ENCODE measurements at regions of chr9 and their contacts with region 1.

Region 1: GRCh38 chr9:133803028-133803585 is 65.0 kb upstream of the SARDH start:
- DNase-seq: no peak
- H3K4me3 ChIP-seq: no peak overlapping the region
- H3K27ac ChIP-seq: no peak overlapping the region
- H3K4me1 ChIP-seq: no peaks in the 10 kb centered on the region
- H3K27me3 ChIP-seq: no peaks in the 10 kb centered on the region
- CTCF ChIP-seq: no peak

Region 2: GRCh38 chr9:133499132-133499891 is 303.8 kb before region 1 on chr9:
- CTCF ChIA-PET with region 1: no interaction called
- dilution Hi-C with region 1: no loop called
- in situ Hi-C with region 1: no loop called
- intact Hi-C with region 1: no loop called
- DNase-seq: no peak
- H3K4me3 ChIP-seq: no peak overlapping the region
- H3K27ac ChIP-seq: no peak overlapping the region
- H3K4me1 ChIP-seq: no peaks in the 10 kb centered on the region
- H3K27me3 ChIP-seq: no peaks in the 10 kb centered on the region
- CTCF ChIP-seq: no peak

Region 3: DNA sequence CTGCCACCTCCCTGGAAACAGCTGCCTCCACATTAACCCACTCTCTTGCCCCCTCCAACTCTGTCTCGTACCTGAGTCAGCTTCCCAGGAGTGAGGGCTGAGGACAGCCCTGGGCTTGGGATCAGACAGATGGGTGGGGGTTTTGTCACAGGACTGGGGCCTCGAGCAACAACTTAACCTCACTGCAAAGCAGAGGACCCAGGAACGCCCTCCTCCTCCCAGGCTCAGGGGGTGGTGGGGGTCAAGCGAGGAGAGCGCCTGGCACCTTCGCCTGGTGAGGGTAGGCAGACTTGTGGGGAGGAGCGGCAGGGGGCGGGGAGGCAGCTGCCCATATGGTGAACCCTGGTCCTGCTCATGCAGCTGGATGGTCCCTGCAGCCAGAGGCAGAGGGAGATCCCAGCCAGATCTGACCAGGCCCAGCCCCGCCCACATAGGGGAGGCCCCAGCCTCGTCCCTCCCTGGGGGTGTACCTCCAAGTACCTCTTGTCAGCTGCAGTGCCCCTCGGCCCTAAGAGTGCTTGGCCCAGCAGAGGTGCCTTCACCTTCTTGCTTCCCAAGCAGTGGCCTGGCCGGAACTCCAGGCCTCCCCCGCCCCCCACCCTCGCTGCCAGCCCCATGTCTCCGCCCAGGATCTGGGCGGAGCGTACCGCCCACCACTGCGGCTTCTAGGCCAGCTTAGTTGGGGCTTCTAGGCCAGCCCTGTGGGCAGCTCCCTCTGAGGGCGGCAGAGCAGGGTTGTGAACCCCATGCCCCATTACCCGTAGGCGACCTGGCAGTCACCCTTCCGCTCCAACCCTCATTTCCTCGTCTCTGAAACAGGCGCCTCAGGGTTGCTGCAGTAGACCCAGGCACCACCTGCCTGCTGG is 65.1 kb before region 1 on chr9 and contains the start of gene SARDH:
- CTCF ChIA-PET with region 1: no interaction called
- dilution Hi-C with region 1: no loop called
- in situ Hi-C with region 1: no loop called
- intact Hi-C with region 1: no loop called
- DNase-seq: no peak
- H3K4me3 ChIP-seq: peak within 1 kb of the TSS in 2 of 3 experiments; percentile 15 to 17
- H3K27ac ChIP-seq: no peak within 1 kb of the TSS
- H3K4me1 ChIP-seq: peaks cover 16% of the 10 kb centered on the region
- H3K27me3 ChIP-seq: no peaks in the 10 kb centered on the region
- CTCF ChIP-seq: no peak
- total RNA-seq, gene SARDH: 7.2 TPM in 1 of 2 donors, not detected in the other

Region 4: GRCh38 chr9:133874056-133874642 is 71.0 kb after region 1 on chr9:
- CTCF ChIA-PET with region 1: no interaction called
- dilution Hi-C with region 1: loop called (anchors 10 kb)
- in situ Hi-C with region 1: no loop called
- intact Hi-C with region 1: no loop called
- DNase-seq: peak; percentile 99
- H3K4me3 ChIP-seq: peak overlapping the region in 1 of 3 experiments; percentile 7
- H3K27ac ChIP-seq: peak overlapping the region; percentile 98
- H3K4me1 ChIP-seq: peaks cover 53% of the 10 kb centered on the region
- H3K27me3 ChIP-seq: no peaks in the 10 kb centered on the region
- CTCF ChIP-seq: no peak

Measured in mammary epithelial cell (primary cell).